Naive thymus-derived CD4-positive, alpha-beta T cell (primary cell): ENCODE measurements at regions of chr9 and their contacts with region 1.

Region 1: DNA sequence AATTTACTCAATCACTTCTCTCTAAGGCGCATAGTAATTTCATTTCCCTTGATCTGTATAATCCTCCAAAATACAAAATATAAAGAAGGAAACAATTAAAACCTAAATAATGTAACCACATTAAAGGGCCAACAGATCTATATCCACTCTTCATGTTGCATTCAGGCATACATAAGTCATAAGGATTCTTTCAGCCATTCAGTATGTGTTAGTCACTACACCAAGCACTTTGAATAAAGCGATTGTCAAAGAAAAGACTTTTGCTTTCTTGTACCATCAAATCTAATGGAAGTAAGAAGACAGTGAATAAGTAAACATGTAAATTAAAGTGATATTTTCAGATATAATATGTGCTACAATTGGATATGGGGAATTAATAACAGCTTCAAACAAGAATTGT is 569.2 kb upstream of the PTPRD start:
- DNase-seq: no peak
- ATAC-seq: no peak
- H3K4me3 ChIP-seq: no peak overlapping the region
- H3K4me3 Mint-ChIP-seq: no peak overlapping the region
- H3K27ac ChIP-seq: no peak overlapping the region
- H3K27ac Mint-ChIP-seq: no peak overlapping the region
- H3K4me1 ChIP-seq: no peaks in the 10 kb centered on the region
- H3K4me1 Mint-ChIP-seq: no peaks in the 10 kb centered on the region
- H3K27me3 ChIP-seq: no peaks in the 10 kb centered on the region
- H3K27me3 Mint-ChIP-seq: no peaks in the 10 kb centered on the region

Region 2: DNA sequence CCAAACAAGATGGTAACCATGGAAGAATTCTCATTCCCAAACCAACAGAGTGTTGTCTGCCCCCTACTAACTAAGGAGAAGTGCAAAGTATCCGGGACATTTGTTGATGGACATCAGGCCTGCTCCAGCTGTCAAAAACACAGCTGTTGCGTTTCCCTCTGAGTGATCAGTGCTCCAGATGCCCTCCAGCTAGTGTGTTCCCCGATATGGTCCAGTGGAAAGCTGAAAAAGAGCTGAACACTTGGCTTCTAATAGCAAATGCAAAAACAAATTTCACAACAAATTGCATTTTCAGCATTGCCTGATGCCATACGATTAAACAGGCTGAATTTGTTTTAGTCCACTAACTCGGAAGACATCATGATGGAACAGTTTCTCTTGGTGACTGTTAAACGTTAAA is 1967.9 kb before region 1 on chr9:
- CTCF ChIA-PET with region 1: no interaction called
- POLR2A ChIA-PET with region 1: no interaction called
- intact Hi-C with region 1: no loop called
- DNase-seq: no peak
- ATAC-seq: no peak
- H3K4me3 ChIP-seq: no peak overlapping the region
- H3K4me3 Mint-ChIP-seq: no peak overlapping the region
- H3K27ac ChIP-seq: no peak overlapping the region
- H3K27ac Mint-ChIP-seq: no peak overlapping the region
- H3K4me1 ChIP-seq: no peaks in the 10 kb centered on the region
- H3K4me1 Mint-ChIP-seq: no peaks in the 10 kb centered on the region
- H3K27me3 ChIP-seq: no peaks in the 10 kb centered on the region
- H3K27me3 Mint-ChIP-seq: no peaks in the 10 kb centered on the region

Region 3: DNA sequence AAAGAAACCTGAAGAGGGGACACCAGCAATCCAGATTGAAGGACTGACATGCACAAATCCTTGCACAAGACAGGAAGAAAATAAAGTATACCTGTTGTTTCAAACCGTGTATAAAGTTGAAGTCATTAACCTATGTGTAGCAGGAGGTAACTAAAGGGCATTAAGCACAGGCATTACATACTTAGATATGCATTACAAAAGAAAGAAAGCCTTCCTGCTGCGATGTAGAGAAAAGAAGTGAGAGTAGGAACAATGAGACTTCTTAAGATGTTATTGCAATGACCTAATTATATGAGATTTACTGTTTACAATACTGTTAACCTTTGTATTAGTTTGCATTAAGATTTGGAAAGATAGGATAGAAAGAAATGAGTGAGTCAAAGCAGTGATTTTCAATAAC is 260.3 kb before region 1 on chr9:
- CTCF ChIA-PET with region 1: no interaction called
- POLR2A ChIA-PET with region 1: no interaction called
- intact Hi-C with region 1: no loop called
- DNase-seq: no peak
- ATAC-seq: no peak
- H3K4me3 ChIP-seq: no peak overlapping the region
- H3K4me3 Mint-ChIP-seq: no peak overlapping the region
- H3K27ac ChIP-seq: no peak overlapping the region
- H3K27ac Mint-ChIP-seq: no peak overlapping the region
- H3K4me1 ChIP-seq: no peaks in the 10 kb centered on the region
- H3K4me1 Mint-ChIP-seq: no peaks in the 10 kb centered on the region
- H3K27me3 ChIP-seq: no peaks in the 10 kb centered on the region
- H3K27me3 Mint-ChIP-seq: no peaks in the 10 kb centered on the region

Region 4: DNA sequence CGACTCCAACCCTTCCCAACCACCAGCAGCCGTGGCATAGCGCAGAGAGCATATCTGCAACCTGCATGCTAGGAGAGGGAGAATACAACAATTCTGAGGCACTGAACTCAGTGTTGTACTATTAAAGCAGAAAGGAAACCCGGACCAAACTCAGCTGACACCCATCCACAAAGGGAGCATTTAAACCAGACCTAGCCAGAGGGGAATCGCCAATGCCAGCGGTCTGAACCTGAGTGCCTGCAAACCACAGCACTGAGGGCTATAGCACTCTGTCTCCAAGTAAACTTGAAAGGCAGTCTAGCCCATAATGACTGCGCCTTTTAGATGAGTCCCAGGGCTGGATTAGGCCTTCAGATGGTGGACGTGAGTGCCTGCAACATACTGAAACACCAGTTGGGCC is 74.8 kb before region 1 on chr9:
- CTCF ChIA-PET with region 1: no interaction called
- POLR2A ChIA-PET with region 1: no interaction called
- intact Hi-C with region 1: loop called in 1 of 2 experiments (anchors 10 kb)
- DNase-seq: no peak
- ATAC-seq: no peak
- H3K4me3 ChIP-seq: no peak overlapping the region
- H3K4me3 Mint-ChIP-seq: no peak overlapping the region
- H3K27ac ChIP-seq: no peak overlapping the region
- H3K27ac Mint-ChIP-seq: no peak overlapping the region
- H3K4me1 ChIP-seq: no peaks in the 10 kb centered on the region
- H3K4me1 Mint-ChIP-seq: peaks cover 0 to 1% (median 0%) of the 10 kb centered on the region in 7 donors
- H3K27me3 ChIP-seq: no peaks in the 10 kb centered on the region
- H3K27me3 Mint-ChIP-seq: no peaks in the 10 kb centered on the region

Region 5: GRCh38 chr9:11128156-11128555 is 53.8 kb before region 1 on chr9:
- CTCF ChIA-PET with region 1: no interaction called
- POLR2A ChIA-PET with region 1: no interaction called
- intact Hi-C with region 1: loop called in 1 of 2 experiments (anchors 10 kb)
- DNase-seq: no peak
- ATAC-seq: no peak
- H3K4me3 ChIP-seq: no peak overlapping the region
- H3K4me3 Mint-ChIP-seq: no peak overlapping the region
- H3K27ac ChIP-seq: no peak overlapping the region
- H3K27ac Mint-ChIP-seq: no peak overlapping the region
- H3K4me1 ChIP-seq: no peaks in the 10 kb centered on the region
- H3K4me1 Mint-ChIP-seq: no peaks in the 10 kb centered on the region
- H3K27me3 ChIP-seq: no peaks in the 10 kb centered on the region
- H3K27me3 Mint-ChIP-seq: no peaks in the 10 kb centered on the region